A673 (cell line): ENCODE measurements at regions of chr15 and their contacts with region 1.

Region 1: DNA sequence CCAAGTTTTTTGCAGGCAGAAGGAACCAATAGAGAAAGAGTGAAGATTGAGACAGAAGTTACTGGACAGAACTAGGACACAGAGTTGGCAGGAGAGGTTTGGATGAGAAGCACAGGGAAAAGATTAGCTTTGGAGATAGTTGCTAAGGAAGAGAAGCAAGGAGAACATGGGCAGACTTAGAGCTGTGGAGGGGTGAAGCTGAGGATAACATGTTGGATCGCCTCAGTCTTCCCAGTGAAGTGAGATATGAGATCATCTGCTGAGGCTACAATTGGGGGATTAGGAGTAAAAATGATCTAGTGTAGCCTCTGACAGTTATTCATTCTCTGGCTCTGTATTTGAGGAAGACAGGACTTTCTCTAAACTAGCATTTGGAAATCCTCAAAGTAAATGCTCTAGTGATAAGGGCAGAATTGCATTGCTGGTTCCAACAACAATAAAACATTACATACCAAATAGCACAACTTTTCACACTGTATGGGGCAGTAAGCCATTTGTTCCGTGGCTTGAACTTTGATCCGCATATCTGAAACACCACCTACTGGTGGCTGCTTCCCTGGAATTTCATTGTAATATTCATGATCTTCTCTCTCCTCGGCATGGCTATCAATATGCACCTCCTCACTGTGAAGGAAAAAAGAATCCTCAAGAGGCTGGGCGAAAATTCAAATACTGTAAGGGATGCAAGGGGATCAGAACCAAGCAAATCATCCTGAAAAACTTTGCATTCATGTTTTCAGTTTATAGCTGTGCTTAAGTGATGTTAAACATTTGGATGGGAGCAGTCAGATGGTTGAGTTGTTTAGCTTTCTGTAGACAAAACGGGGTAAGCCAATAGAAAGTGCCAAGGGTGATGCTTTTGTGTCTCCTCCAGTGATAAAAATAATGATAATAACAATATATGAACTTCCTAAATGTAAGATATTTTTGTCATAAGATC is 22.2 kb upstream of the EID1 start:
- DNase-seq: peak; percentile 62
- H3K4me3 ChIP-seq: no peak overlapping the region
- H3K27ac ChIP-seq: no peak overlapping the region
- H3K4me1 ChIP-seq: peaks cover 19% of the 10 kb centered on the region
- H3K27me3 ChIP-seq: no peaks in the 10 kb centered on the region
- CTCF ChIP-seq: peak; percentile 67

Region 2: DNA sequence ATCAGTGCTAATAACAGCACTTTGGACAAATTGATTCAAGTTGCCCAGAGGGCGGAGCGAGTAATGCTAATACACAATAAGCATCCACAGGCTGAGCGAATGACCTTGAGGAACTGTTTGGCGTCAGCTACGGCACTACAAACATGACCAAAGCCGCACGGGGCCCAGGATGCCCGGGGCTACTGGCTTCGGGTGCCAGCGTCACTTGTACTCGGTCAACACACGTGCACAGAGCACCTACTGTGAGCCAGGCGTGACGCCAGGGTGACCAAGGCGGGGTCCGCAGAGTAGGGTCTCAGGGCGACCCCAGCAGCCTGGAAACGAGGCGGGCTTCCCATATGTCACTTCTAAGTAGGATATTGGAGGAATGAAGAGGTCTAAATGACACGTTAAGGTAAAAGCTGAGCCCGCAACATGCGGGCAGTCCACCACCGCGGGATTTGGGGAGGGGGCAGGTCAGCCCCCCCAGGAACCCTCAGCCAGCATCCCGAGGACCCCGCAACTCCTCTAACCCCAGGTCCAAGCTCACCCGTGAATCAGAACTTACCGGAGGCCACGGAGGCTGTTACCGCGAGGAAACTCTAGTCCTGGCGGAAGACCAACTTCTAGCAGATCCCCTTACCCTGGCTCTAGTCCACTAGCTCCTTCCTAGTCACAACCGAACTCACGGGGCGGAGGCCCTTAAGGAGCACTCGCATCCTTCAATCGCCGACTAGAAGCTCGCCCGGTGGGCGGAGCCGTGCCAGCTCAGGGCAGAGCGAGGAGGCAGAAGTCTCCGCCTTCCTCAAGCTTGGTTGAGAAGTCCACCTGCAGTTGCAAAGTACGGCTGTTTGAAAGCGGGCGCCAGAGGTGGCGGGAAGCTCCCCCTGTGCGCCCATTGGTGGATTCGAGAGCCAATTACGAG is 45.1 kb before region 1 on chr15 and contains the start of gene CEP152:
- CTCF ChIA-PET with region 1: no interaction called
- POLR2A ChIA-PET with region 1: no interaction called
- intact Hi-C with region 1: loop called (anchors 5 kb)
- DNase-seq: peak; percentile 100
- H3K4me3 ChIP-seq: peak within 1 kb of the TSS; percentile 83
- H3K27ac ChIP-seq: peak within 1 kb of the TSS; percentile 87
- H3K4me1 ChIP-seq: peaks cover 29% of the 10 kb centered on the region
- H3K27me3 ChIP-seq: no peaks in the 10 kb centered on the region
- CTCF ChIP-seq: no peak
- total RNA-seq, gene CEP152: 31.6 and 33.7 TPM in 2 replicates

Region 3: GRCh38 chr15:49225613-49226281 is 370.0 kb after region 1 on chr15:
- CTCF ChIA-PET with region 1: no interaction called
- POLR2A ChIA-PET with region 1: no interaction called
- intact Hi-C with region 1: loop called (anchors 2 kb)
- DNase-seq: peak; percentile 72
- H3K4me3 ChIP-seq: no peak overlapping the region
- H3K27ac ChIP-seq: no peak overlapping the region
- H3K4me1 ChIP-seq: peaks cover 7% of the 10 kb centered on the region
- H3K27me3 ChIP-seq: no peaks in the 10 kb centered on the region
- CTCF ChIP-seq: peak; percentile 58